T-cell (primary cell): ENCODE measurements at regions of chr18 and their contacts with region 1.

Region 1: DNA sequence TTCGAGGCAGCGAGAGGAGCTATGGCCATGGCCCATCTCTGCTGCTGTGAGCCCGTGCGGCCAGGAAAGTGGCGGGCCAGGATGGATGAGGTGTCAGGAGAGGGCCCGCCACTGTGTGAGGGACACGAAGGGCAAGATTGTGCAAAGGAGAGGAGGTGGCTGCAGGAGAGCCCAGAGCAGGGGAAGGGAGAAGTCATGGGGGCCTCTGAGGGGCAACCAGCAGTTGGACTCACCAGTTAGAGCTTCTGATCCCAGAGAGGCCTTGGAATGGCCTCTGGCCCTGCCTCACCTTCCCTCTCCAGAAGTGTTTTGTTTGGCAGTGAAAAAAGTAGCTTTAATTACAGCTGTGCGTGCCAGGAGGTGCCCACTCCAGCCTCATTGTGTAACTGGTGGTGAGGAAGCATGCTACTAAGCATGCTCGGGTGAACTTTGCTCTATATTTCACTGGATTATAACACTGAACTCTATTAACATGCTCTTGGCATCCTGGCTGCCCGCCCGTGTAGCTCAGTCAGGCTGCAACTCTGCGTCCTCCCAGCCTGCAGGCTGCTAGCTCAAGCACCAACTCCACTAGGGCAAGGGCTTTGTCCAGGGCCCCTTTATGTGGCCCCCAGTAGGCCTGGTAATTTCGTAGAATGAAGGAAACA is 34.2 kb downstream of the IMPA2 start:
- DNase-seq: no peak
- ATAC-seq: no peak
- H3K4me3 ChIP-seq: no peak overlapping the region
- H3K4me3 Mint-ChIP-seq: no peak overlapping the region
- H3K27ac ChIP-seq: no peak overlapping the region
- H3K27ac Mint-ChIP-seq: peak overlapping the region in 1 of 2 donors; percentile 24
- H3K4me1 ChIP-seq: no peaks in the 10 kb centered on the region
- H3K4me1 Mint-ChIP-seq: peaks cover 0 to 2% (median 0%) of the 10 kb centered on the region in 3 donors
- H3K27me3 ChIP-seq: no peaks in the 10 kb centered on the region
- H3K27me3 Mint-ChIP-seq: no peaks in the 10 kb centered on the region

Region 2: GRCh38 chr18:11932393-11932792 is 83.1 kb before region 1 on chr18:
- CTCF ChIA-PET with region 1: no interaction called
- POLR2A ChIA-PET with region 1: interaction called in 1 of 2 experiments, 12 read pairs
- DNase-seq: no peak
- ATAC-seq: no peak
- H3K4me3 ChIP-seq: no peak overlapping the region
- H3K4me3 Mint-ChIP-seq: no peak overlapping the region
- H3K27ac ChIP-seq: no peak overlapping the region
- H3K27ac Mint-ChIP-seq: no peak overlapping the region
- H3K4me1 ChIP-seq: no peaks in the 10 kb centered on the region
- H3K4me1 Mint-ChIP-seq: no peaks in the 10 kb centered on the region
- H3K27me3 ChIP-seq: peaks cover 0 to 12% of the 10 kb centered on the region in 2 experiments
- H3K27me3 Mint-ChIP-seq: peaks cover 0 to 4% of the 10 kb centered on the region in 2 donors